Caco-2 (cell line): ENCODE measurements at regions of chr14 and their contacts with region 1.

Region 1: DNA sequence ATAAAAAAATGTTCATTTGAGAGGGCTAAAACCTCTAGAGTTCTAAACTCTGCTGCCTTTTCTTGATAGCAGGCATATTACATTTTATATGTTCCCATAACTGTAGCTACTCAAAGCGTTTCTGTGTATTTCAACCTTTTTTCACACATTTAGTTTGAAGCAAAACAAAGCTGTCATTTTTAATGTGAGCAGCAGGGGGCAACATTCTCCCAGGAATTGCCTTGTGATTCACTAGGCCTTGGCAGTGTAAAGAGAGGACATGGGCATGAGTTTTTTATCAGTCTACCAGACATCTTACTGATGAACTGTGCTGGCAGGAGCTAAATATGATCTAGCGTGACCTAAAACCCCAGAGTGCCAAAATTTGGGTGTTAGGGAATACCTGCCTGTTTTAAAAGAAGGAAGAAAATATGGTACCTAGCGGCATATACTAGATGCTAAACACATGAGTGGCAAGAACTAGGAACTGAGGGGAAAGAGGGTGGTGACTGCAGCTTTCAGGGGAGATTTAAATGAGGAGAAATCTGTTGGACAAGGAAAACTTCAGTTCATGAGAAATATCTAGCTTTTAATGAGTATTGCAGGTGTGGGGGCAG is 65.3 kb downstream of the IFT43 start:
- DNase-seq: peak; percentile 41 to 69
- H3K4me3 ChIP-seq: no peak overlapping the region
- H3K4me3 Mint-ChIP-seq: no peak overlapping the region
- H3K27ac Mint-ChIP-seq: no peak overlapping the region
- H3K4me1 ChIP-seq: no peaks in the 10 kb centered on the region
- H3K4me1 Mint-ChIP-seq: no peaks in the 10 kb centered on the region
- H3K27me3 ChIP-seq: no peaks in the 10 kb centered on the region
- H3K27me3 Mint-ChIP-seq: no peaks in the 10 kb centered on the region
- CTCF ChIP-seq: peak; percentile 52 to 70

Region 2: GRCh38 chr14:76090616-76091391 is 39.9 kb after region 1 on chr14:
- CTCF ChIA-PET with region 1: no interaction called
- POLR2A ChIA-PET with region 1: no interaction called
- intact Hi-C with region 1: loop called (anchors 2 kb)
- DNase-seq: peak in 1 of 2 experiments; percentile 20
- H3K4me3 ChIP-seq: no peak overlapping the region
- H3K4me3 Mint-ChIP-seq: no peak overlapping the region
- H3K27ac Mint-ChIP-seq: no peak overlapping the region
- H3K4me1 ChIP-seq: no peaks in the 10 kb centered on the region
- H3K4me1 Mint-ChIP-seq: no peaks in the 10 kb centered on the region
- H3K27me3 ChIP-seq: no peaks in the 10 kb centered on the region
- H3K27me3 Mint-ChIP-seq: peaks cover 6% of the 10 kb centered on the region
- CTCF ChIP-seq: peak in 1 of 2 experiments; percentile 33

Region 3: DNA sequence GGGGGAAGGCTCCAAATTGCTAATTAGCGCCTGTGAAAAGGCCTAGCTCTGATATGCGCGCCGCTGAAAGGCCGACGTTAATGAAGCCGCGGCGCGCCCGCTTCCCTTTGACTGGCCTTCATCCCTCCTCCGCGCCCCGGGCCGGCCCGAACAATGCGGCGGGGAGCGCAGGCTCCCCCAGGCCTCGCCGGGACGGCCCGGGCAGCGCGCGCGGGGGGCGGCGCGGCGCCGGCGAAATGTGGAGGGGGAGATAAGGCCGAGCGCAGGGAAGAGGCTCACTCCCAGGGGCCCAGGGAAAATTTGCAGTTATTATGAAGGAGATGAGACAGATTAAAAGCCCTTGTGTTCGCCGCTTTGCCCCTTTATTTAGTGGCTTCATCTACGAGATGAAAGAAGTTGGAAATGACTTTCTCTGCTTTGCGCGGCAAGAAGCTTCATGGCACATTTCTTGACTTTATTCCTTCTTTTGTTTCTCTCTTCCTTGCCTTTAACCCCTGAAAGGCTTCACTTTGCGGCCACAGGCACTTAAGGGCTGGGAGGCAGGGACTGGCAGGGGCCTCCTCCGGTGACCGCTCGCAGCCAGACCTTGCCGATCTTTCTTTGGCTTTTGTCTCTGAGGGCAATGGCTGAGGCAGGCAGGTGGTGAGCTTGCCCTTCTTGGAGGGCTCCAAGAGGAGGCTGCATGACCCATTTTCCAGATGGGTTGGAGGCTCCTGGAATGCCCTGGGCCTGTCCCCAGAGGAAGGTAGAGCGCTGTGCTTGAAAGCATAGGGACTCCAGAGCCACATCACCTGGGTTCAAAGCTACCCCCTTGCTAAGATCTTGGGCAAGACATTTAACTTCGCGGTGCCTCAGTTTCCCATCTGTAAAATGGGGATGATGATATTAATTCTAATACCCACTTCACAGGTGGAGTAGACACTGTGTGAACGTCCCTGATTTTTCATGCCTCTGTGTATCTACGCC is 88.1 kb after region 1 on chr14:
- CTCF ChIA-PET with region 1: no interaction called
- POLR2A ChIA-PET with region 1: no interaction called
- intact Hi-C with region 1: no loop called
- DNase-seq: no peak
- H3K4me3 ChIP-seq: no peak overlapping the region
- H3K4me3 Mint-ChIP-seq: no peak overlapping the region
- H3K27ac Mint-ChIP-seq: no peak overlapping the region
- H3K4me1 ChIP-seq: no peaks in the 10 kb centered on the region
- H3K4me1 Mint-ChIP-seq: no peaks in the 10 kb centered on the region
- H3K27me3 ChIP-seq: no peaks in the 10 kb centered on the region
- H3K27me3 Mint-ChIP-seq: peaks cover 27% of the 10 kb centered on the region
- CTCF ChIP-seq: no peak

Region 4: GRCh38 chr14:76352639-76353281 is 301.9 kb after region 1 on chr14:
- CTCF ChIA-PET with region 1: interaction called, 7 read pairs
- POLR2A ChIA-PET with region 1: no interaction called
- intact Hi-C with region 1: loop called (anchors 1 kb)
- DNase-seq: peak; percentile 68 to 82
- H3K4me3 ChIP-seq: peak overlapping the region; percentile 16
- H3K4me3 Mint-ChIP-seq: peak overlapping the region; percentile 48
- H3K27ac Mint-ChIP-seq: no peak overlapping the region
- H3K4me1 ChIP-seq: no peaks in the 10 kb centered on the region
- H3K4me1 Mint-ChIP-seq: no peaks in the 10 kb centered on the region
- H3K27me3 ChIP-seq: no peaks in the 10 kb centered on the region
- H3K27me3 Mint-ChIP-seq: peaks cover 15% of the 10 kb centered on the region
- CTCF ChIP-seq: peak; percentile 88 to 92

Region 5: DNA sequence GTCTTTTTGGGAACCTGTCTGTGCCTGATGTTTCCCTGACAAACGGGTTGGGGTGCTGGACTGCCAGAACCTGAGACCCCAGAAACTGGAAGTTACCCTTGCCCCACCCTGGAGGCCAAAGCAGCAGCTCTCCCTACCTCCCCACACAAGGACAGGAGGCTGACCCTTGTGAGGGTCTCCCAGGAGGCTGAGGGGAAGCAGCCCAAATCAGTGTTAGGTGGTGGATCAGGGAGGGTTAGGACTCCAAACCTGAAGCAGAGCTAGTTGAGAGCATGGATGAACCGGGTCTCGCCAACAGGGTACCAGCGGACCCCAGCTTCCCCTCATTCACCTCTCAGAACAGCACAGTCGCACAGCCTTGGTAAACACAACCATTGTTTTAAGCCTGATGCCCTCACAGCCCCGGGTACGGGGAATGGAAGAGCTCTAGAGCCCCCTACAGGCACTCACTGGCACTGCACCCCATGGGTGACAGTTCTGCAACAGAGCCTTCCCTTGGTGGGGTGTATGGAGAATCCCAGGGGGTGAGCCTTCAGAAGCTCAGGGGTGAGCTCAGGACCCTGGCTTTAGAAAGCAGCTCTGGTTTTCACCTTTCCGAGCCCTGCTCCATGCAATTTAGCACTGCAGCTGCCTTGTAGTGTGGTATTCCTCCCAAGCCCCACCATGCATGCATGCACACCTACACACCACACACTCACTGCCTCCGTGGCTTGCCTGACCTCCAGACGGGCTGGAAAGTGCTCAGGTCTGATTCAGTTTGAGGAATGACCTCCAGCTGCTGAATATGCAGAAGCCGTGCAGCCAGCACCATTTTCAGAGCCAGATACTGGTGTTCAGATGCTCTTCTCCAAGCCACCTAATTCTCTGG is 336.3 kb after region 1 on chr14:
- CTCF ChIA-PET with region 1: interaction called, 18 read pairs
- POLR2A ChIA-PET with region 1: no interaction called
- intact Hi-C with region 1: loop called (anchors 1 kb)
- DNase-seq: peak; percentile 58 to 83
- H3K4me3 ChIP-seq: no peak overlapping the region
- H3K4me3 Mint-ChIP-seq: no peak overlapping the region
- H3K27ac Mint-ChIP-seq: no peak overlapping the region
- H3K4me1 ChIP-seq: no peaks in the 10 kb centered on the region
- H3K4me1 Mint-ChIP-seq: no peaks in the 10 kb centered on the region
- H3K27me3 ChIP-seq: no peaks in the 10 kb centered on the region; the same call in none of the 2 replicates
- H3K27me3 Mint-ChIP-seq: peaks cover 16% of the 10 kb centered on the region
- CTCF ChIP-seq: peak; percentile 92 to 96

Region 6: DNA sequence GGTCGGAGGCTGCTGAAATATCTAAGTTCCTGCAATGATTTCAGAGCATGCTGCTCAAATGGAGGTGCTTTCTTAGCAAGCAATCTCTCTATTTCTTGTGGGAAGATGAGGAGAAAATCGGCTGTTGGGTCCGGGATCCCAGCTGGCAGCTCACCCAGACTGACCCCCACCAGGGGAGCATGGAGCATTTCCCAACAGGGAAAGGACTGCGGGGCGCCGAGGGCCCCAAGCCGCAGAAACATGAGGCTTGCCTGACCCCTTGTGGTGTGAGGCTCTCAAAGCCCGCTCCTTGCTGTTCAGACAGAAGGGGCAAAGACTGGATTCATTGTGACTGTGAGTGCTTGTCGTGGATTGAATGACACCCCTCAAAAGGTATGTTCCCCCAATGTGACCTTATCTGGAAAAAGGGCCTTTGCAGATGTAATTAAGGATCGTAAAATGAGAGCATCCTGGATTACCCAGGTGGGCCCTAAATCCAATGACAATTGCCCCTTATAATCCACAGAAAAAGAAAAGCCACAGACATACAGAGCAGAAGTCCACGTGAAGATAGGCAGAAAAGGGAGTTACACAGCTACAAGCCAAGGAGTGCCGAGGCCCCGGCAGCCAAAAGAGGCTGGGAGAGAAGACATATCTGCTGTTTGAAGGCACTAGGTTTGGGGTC is 594.1 kb after region 1 on chr14:
- CTCF ChIA-PET with region 1: no interaction called
- POLR2A ChIA-PET with region 1: no interaction called
- intact Hi-C with region 1: loop called (anchors 1 kb)
- DNase-seq: peak; percentile 46 to 69
- H3K4me3 ChIP-seq: no peak overlapping the region
- H3K4me3 Mint-ChIP-seq: no peak overlapping the region
- H3K27ac Mint-ChIP-seq: no peak overlapping the region
- H3K4me1 ChIP-seq: no peaks in the 10 kb centered on the region
- H3K4me1 Mint-ChIP-seq: no peaks in the 10 kb centered on the region
- H3K27me3 ChIP-seq: no peaks in the 10 kb centered on the region
- H3K27me3 Mint-ChIP-seq: peaks cover 19% of the 10 kb centered on the region
- CTCF ChIP-seq: peak; percentile 68 to 71